AG04450 (cell line): ENCODE measurements at regions of chr7 and their contacts with region 1.

Region 1: DNA sequence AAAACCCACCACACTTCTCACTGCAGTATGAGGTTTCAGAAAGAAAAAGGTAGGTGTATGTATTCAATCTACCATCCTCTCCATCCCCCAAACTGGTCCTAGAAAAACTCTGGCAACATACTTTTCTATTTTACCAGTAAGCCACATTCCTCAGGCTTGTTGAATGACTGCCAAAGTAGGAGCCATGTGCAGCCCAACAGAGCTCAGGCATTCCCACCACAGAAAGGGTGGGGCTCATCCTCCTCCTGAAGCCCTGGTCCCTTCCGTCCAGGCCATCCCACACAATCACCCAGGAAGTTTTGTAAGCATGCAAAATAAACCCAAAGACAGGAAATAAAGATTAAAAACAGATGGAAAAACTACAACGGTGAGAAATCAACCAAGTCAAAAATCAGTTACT is 57.2 kb downstream of the MAD1L1 start:
- DNase-seq: peak; percentile 91
- H3K4me3 ChIP-seq: no peak overlapping the region
- H3K27ac ChIP-seq: peak overlapping the region; percentile 52
- H3K27me3 ChIP-seq: peaks cover 1% of the 10 kb centered on the region
- CTCF ChIP-seq: no peak

Region 2: DNA sequence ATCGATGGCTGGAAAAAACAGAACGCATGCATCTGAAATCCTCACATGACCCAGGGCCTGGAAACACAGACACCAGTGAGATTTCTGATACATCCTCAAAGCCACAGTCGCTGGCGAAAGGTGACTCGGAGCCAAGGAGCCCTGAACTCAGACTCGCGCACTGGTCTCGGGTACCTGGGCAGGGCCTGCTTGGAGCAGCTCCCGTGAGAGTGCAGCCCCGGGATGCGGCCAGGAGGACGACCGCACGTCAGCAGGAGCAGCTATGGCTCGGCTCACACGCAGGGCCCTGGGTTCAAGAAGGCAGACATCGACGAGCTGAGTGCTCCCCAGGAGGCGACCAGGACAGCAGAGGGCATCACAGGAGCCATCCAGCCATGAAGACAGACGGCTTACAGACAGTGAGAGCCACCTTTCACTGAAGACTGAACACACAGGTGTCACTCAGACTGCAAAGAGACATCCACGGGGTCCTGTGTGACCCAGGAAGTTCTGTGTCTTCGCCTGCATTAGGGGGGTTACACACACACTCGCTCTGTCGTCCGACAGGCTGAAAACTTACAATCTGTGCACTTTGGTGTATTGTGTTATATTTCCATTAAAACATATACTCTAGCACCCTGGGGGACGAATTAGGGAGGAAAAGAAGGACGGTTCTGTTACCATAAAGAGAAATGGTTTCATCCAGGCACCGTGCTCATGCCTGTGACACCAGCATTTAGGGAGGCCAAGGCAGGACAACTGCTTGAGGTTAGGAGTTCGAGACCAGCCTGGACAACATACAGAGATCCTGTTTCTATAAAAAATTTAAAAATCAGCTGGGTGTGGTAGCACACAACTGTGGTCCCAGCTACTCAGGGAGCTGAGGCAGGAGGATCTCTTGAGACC is 170.4 kb before region 1 on chr7:
- CTCF ChIA-PET with region 1: no interaction called
- POLR2A ChIA-PET with region 1: no interaction called
- DNase-seq: no peak
- H3K4me3 ChIP-seq: no peak overlapping the region
- H3K27ac ChIP-seq: no peak overlapping the region
- H3K27me3 ChIP-seq: no peaks in the 10 kb centered on the region
- CTCF ChIP-seq: no peak

Region 3: GRCh38 chr7:2082139-2082998 is 93.1 kb before region 1 on chr7:
- CTCF ChIA-PET with region 1: no interaction called
- POLR2A ChIA-PET with region 1: no interaction called
- DNase-seq: peak; percentile 59
- H3K4me3 ChIP-seq: no peak overlapping the region
- H3K27ac ChIP-seq: peak overlapping the region; percentile 73
- H3K27me3 ChIP-seq: no peaks in the 10 kb centered on the region
- CTCF ChIP-seq: no peak

Region 4: DNA sequence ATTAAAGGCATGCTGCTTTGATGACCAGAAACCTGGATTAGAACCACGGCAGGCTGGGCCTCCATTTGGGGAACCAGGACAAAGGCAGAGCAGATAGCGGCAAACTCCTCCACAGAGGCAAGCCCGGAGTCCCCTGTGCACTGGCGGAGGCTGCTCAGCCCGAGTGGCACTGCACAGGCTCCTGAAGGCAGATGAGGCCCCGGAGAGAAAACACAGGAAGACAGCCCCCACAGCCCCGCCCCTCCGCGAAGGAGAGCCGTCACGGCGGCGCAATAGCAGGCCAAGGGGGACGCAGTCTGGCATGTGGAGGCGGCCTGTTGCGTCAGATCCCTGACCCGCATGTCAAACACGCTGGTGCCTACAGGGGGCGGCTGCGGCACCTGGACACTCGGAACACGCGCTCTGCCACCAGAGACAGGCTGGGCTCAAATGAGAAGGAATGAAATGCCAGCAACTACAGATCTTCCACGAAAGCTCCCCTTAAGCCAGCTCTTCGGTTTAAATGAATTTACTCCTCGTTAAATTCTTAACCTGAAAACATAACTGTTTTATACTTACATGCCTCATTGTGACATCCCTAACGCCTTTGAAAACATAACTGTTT is 71.3 kb before region 1 on chr7:
- CTCF ChIA-PET with region 1: no interaction called
- POLR2A ChIA-PET with region 1: interaction called, 13 read pairs
- DNase-seq: peak; percentile 76
- H3K4me3 ChIP-seq: no peak overlapping the region
- H3K27ac ChIP-seq: peak overlapping the region; percentile 80
- H3K27me3 ChIP-seq: no peaks in the 10 kb centered on the region
- CTCF ChIP-seq: peak; percentile 82

Region 5: DNA sequence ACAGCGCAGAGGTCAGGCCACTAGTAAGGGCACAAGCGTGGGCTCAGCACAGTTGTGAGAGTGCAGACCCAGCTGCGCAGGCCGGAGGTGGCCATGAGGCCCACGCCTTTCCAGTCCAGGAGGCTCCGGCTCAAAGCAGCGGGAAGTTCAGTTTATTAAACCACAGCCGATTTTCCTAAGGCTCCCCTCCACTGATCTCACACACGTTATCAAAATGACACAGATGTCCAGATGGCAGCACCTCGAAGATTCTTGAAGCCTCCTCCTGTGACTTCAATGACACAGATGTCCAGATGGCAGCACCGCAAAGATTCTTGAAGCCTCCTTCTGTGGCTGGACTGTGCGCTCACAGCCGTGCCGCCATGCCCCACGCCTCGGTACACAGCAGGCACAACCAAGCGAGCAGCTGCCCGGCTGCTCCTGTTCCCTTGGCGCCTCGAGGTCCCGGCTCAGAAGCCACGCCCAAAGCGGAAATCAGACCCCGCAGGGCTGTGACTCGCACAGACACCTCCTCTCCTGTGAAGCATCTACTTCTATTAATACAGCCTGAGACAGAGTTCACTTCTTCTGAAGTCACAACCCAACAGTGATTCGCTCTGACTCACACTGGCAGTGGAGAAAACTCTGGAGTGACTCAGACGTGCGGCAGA is 65.5 kb before region 1 on chr7:
- CTCF ChIA-PET with region 1: no interaction called
- POLR2A ChIA-PET with region 1: interaction called, 13 read pairs
- DNase-seq: peak; percentile 61
- H3K4me3 ChIP-seq: no peak overlapping the region
- H3K27ac ChIP-seq: peak overlapping the region; percentile 85
- H3K27me3 ChIP-seq: no peaks in the 10 kb centered on the region
- CTCF ChIP-seq: no peak

Region 6: DNA sequence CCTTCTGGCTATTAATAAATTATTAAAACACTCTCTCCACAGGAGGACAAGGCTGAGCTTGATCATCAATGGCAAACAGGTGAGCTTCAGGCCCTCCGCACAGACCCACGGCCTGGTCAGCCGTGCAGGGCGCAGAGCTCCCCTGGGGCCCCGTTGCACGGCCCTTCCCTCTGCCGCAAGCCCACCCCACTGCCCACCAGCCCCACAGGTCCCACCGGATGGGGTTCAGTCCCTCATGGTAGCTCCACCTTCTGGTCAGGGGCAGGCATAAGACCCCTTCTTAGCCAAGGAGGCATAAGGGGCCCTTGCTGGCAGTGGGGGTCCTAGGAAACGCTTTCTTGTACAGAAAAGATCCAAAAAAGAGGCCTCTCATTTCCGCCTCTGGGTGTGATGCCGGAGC is 27.3 kb before region 1 on chr7:
- CTCF ChIA-PET with region 1: no interaction called
- POLR2A ChIA-PET with region 1: no interaction called
- DNase-seq: no peak
- H3K4me3 ChIP-seq: no peak overlapping the region
- H3K27ac ChIP-seq: no peak overlapping the region
- H3K27me3 ChIP-seq: no peaks in the 10 kb centered on the region
- CTCF ChIP-seq: no peak